ENCODE measurements at regions of chr1 and their contacts with region 1.

Region 1: DNA sequence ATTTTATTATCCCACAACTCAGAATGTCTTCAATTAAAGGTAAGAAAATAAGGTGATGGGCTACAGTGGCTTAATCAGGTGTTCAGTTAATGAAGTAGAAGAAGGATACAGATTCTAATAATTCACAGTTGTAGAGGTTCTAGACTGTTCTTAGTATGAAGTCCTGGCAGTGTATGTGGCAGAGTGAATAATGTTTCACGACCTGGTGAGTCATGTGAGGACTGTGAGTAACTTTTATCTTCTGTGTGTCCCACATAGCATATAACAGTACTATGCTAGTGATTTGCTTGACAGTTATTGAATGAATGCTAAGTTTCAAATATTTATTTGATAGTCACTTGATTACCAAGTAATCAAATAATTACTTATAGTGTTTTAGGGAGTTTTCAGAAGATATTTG is 20.0 kb downstream of the SLC16A4 start:
- DNase-seq: no peak
- H3K4me3 Mint-ChIP-seq: no peak overlapping the region
- H3K27ac Mint-ChIP-seq: no peak overlapping the region
- H3K4me1 Mint-ChIP-seq: peaks cover 8% of the 10 kb centered on the region
- H3K27me3 Mint-ChIP-seq: no peaks in the 10 kb centered on the region

Region 2: GRCh38 chr1:110356405-110356804 is 14.4 kb before region 1 on chr1:
- intact Hi-C with region 1: loop called (anchors 2 kb)
- DNase-seq: no peak
- H3K4me3 Mint-ChIP-seq: no peak overlapping the region
- H3K27ac Mint-ChIP-seq: peak overlapping the region; percentile 1
- H3K4me1 Mint-ChIP-seq: peaks cover 22% of the 10 kb centered on the region
- H3K27me3 Mint-ChIP-seq: no peaks in the 10 kb centered on the region